B cell (primary cell): ENCODE measurements at regions of chr12 and their contacts with region 1.

Region 1: DNA sequence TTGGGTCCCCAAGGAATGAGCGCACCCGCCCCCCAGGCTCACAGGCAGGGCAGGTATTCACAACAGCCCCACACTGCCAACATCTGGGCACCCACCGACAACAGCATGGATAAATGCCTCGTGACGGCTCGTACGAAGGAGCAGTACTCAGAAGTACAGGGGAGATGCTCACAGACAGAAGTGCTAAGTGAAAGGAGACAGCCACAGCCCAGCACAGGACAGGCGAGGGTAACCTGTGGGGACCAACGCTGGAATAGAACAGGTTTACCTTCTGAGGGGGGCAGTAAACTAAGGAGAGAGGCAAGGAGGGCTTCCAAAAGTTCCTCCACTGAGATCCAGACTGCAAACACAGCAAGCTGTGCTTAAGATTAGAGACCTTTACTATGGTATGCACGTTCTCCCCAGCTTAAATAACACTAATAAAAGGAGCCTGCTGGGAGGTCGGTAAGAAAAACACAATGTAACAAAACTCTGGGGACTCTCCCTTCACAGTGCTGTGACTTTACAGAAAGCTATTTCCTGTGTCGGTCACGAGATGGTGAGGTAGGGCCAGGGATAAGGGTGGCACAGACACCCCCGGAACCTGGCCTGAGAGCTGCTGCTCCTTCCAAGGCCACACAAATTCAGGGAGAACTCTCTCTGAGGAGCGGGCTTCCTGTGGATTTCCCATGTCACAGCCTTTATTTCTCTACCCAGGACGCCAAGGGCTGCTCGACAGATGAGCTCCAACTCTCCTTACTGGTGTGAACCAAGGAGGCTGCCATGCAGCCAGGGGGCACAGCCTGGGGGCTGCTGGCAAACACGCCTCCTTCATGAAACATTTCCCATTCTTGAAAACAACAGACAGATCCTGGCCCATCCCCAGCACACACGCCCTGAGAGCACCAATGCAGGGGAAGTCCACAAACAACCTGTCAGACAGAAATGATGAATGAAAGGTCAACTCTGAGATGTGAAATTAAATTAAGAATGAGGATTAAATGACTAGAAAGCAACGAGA is 26.3 kb downstream of the SLC15A4 start:
- DNase-seq: peak; percentile 75
- ATAC-seq: peak; percentile 54
- H3K4me3 ChIP-seq: peak overlapping the region in 2 of 5 experiments; percentile 16 to 23
- H3K4me3 Mint-ChIP-seq: peak overlapping the region; percentile 73
- H3K27ac ChIP-seq: peak overlapping the region; percentile 84 to 93
- H3K27ac Mint-ChIP-seq: peak overlapping the region; percentile 88
- H3K4me1 ChIP-seq: peaks cover 84 to 86% of the 10 kb centered on the region in 2 donors
- H3K4me1 Mint-ChIP-seq: peaks cover 91% of the 10 kb centered on the region
- H3K27me3 ChIP-seq: no peaks in the 10 kb centered on the region
- H3K27me3 Mint-ChIP-seq: no peaks in the 10 kb centered on the region
- CTCF ChIP-seq: no peak

Region 2: GRCh38 chr12:128783129-128783574 is 14.3 kb before region 1 on chr12:
- CTCF ChIA-PET with region 1: interaction called, 27 read pairs
- POLR2A ChIA-PET with region 1: interaction called, 6 read pairs
- intact Hi-C with region 1: loop called (anchors 1 kb)
- DNase-seq: peak; percentile 72
- ATAC-seq: peak; percentile 45
- H3K4me3 ChIP-seq: peak overlapping the region in 3 of 5 experiments; percentile 5 to 53 (median 50)
- H3K4me3 Mint-ChIP-seq: peak overlapping the region; percentile 76
- H3K27ac ChIP-seq: peak overlapping the region; percentile 44 to 48
- H3K27ac Mint-ChIP-seq: peak overlapping the region; percentile 69
- H3K4me1 ChIP-seq: peaks cover 33 to 40% of the 10 kb centered on the region in 2 donors
- H3K4me1 Mint-ChIP-seq: peaks cover 24% of the 10 kb centered on the region
- H3K27me3 ChIP-seq: no peaks in the 10 kb centered on the region
- H3K27me3 Mint-ChIP-seq: no peaks in the 10 kb centered on the region
- CTCF ChIP-seq: no peak

Region 3: GRCh38 chr12:128810182-128811127 is 13.0 kb after region 1 on chr12:
- CTCF ChIA-PET with region 1: interaction called, 34 read pairs
- POLR2A ChIA-PET with region 1: interaction called, 21 read pairs
- intact Hi-C with region 1: loop called (anchors 1 kb)
- DNase-seq: peak; percentile 74
- ATAC-seq: peak; percentile 90
- H3K4me3 ChIP-seq: peak overlapping the region in 2 of 5 experiments; percentile 3 to 7
- H3K4me3 Mint-ChIP-seq: peak overlapping the region; percentile 66
- H3K27ac ChIP-seq: peak overlapping the region; percentile 63 to 73
- H3K27ac Mint-ChIP-seq: peak overlapping the region; percentile 85
- H3K4me1 ChIP-seq: peaks cover 43 to 47% of the 10 kb centered on the region in 2 donors
- H3K4me1 Mint-ChIP-seq: peaks cover 56% of the 10 kb centered on the region
- H3K27me3 ChIP-seq: no peaks in the 10 kb centered on the region
- H3K27me3 Mint-ChIP-seq: no peaks in the 10 kb centered on the region
- CTCF ChIP-seq: no peak

Region 4: DNA sequence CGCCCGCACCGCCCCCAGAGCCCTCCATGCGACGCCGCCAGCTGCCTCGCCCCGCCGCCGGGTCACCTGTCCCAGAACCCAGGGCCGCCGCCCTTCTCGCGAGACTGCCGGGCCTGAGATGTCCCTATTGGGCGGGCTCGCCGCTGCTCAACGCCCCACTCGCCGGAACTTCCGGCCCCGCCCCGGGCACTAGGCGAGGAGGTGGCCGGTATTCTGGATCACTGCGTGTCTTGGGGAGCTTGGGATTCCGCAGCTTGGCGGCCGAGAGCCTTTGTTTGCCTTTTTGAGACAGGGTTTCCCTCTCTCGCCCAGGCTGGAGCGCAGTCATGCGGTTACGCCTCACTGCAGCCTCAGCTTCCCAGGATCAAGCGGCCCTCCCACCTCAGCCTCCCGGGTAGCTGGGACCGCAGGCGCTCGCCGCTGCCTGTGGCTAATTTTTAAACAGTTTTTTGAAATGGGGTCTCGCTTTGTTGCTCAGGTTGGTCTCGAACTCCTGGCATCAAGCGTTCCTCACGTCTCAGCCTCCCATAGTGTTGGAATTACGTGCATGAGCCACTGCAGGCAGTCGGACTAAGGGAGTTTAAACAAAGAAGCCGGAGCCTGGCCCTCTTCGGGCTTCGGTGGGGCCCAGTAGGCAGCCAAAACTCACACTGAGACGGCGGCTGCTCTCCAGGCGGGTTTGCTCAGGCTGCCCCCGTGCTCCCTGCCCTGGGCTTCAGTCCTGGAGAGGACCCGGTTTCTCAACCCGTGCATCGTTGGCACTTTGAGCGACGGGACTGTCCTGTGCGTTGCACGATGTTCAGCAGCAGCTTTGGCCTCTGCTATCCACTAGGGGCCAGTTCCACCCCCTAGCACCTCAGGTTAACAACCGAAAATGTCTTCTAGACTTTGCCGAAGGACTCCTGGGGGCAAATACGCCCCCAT is 26.8 kb after region 1 on chr12 and contains the start of gene SLC15A4:
- CTCF ChIA-PET with region 1: interaction called, 65 read pairs
- POLR2A ChIA-PET with region 1: interaction called, 47 read pairs
- intact Hi-C with region 1: loop called (anchors 2 kb)
- DNase-seq: peak; percentile 95
- ATAC-seq: peak; percentile 83
- H3K4me3 ChIP-seq: peak within 1 kb of the TSS; percentile 56 to 93 (median 67)
- H3K4me3 Mint-ChIP-seq: peak within 1 kb of the TSS; percentile 88
- H3K27ac ChIP-seq: peak within 1 kb of the TSS; percentile 69 to 82
- H3K27ac Mint-ChIP-seq: peak within 1 kb of the TSS; percentile 89
- H3K4me1 ChIP-seq: peaks cover 41 to 59% of the 10 kb centered on the region in 2 donors
- H3K4me1 Mint-ChIP-seq: peaks cover 47% of the 10 kb centered on the region
- H3K27me3 ChIP-seq: no peaks in the 10 kb centered on the region
- H3K27me3 Mint-ChIP-seq: no peaks in the 10 kb centered on the region
- CTCF ChIP-seq: no peak
- total RNA-seq, gene SLC15A4: 64.4 and 67.2 TPM in 2 replicates

Region 5: DNA sequence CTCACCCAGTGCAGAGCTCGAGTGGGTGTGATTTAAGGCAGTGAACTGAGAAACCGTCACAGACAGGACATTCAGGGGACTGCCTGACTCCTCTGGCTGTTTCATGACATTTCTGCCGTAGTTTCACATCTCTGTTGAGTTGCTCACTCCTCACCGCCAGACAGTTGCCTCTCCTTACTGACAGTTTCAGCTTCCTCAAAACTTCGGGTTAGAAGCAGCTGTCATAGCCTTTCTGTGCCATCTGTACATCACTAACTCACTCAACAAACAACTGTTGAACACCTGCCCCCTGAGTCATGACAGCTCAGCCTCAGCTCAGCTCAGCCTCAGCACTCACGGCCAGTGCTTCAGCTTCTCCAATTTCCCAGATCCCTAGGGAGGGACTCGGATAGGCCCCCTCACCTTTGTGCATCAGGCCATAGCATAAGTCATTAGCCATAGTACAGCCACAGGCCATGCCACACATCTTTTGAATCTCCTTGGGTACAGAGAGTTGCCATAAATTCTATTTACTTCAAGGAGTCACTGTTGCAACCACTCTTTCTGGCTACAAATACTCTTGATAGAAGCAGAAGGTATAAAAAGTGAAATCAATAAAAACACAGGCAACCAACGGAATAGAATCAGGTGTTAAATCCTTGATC is 32.6 kb after region 1 on chr12:
- CTCF ChIA-PET with region 1: interaction called, 21 read pairs
- POLR2A ChIA-PET with region 1: interaction called, 14 read pairs
- intact Hi-C with region 1: loop called (anchors 1 kb)
- DNase-seq: peak; percentile 91
- ATAC-seq: peak; percentile 88
- H3K4me3 ChIP-seq: peak overlapping the region in 4 of 5 experiments; percentile 13 to 50 (median 20)
- H3K4me3 Mint-ChIP-seq: peak overlapping the region; percentile 76
- H3K27ac ChIP-seq: peak overlapping the region; percentile 88 to 92
- H3K27ac Mint-ChIP-seq: peak overlapping the region; percentile 94
- H3K4me1 ChIP-seq: peaks cover 28 to 33% of the 10 kb centered on the region in 2 donors
- H3K4me1 Mint-ChIP-seq: peaks cover 27% of the 10 kb centered on the region
- H3K27me3 ChIP-seq: no peaks in the 10 kb centered on the region
- H3K27me3 Mint-ChIP-seq: no peaks in the 10 kb centered on the region
- CTCF ChIP-seq: no peak

Region 6: GRCh38 chr12:128914908-128915563 is 117.6 kb after region 1 on chr12:
- CTCF ChIA-PET with region 1: no interaction called
- POLR2A ChIA-PET with region 1: no interaction called
- intact Hi-C with region 1: loop called (anchors 5 kb)
- DNase-seq: peak; percentile 65
- ATAC-seq: peak; percentile 81
- H3K4me3 ChIP-seq: no peak overlapping the region
- H3K4me3 Mint-ChIP-seq: no peak overlapping the region
- H3K27ac ChIP-seq: no peak overlapping the region
- H3K27ac Mint-ChIP-seq: no peak overlapping the region
- H3K4me1 ChIP-seq: peaks cover 4 to 5% of the 10 kb centered on the region in 2 donors
- H3K4me1 Mint-ChIP-seq: peaks cover 8% of the 10 kb centered on the region
- H3K27me3 ChIP-seq: no peaks in the 10 kb centered on the region
- H3K27me3 Mint-ChIP-seq: peaks cover 28% of the 10 kb centered on the region
- CTCF ChIP-seq: no peak